ENCODE measurements at regions of chr2 and their contacts with region 1.

Region 1: GRCh38 chr2:28406276-28407096 is 13.8 kb downstream of the FOSL2 start:
- DNase-seq: no peak
- H3K4me3 ChIP-seq: no peak overlapping the region
- H3K4me1 ChIP-seq: no peaks in the 10 kb centered on the region
- H3K27me3 ChIP-seq: no peaks in the 10 kb centered on the region

Region 2: GRCh38 chr2:27703638-27704341 is 702.7 kb before region 1 on chr2:
- in situ Hi-C with region 1: loop called (anchors 10 kb)
- DNase-seq: peak; percentile 78 to 90
- H3K4me3 ChIP-seq: no peak overlapping the region
- H3K4me1 ChIP-seq: no peaks in the 10 kb centered on the region
- H3K27me3 ChIP-seq: no peaks in the 10 kb centered on the region; the same call in 1 of the 2 replicates

Region 3: DNA sequence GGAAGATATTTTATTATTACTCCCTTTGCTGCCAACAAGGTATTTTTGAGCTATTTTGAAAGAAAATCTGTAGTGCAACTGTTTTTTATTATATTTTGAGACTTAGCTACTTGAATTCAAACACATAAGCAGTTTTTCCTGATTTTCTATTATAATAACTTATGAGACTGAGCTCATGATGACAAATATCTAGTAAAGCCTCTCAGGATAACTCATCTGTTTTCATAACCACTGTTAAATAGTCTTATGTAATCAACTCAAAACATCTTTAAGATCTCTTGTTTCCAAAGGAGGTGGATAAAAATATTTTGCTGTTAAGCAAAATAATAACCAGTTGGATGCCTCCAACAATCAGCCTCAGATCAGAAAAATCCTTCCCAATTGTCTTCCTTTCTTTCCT is 323.2 kb after region 1 on chr2:
- in situ Hi-C with region 1: no loop called
- DNase-seq: no peak
- H3K4me3 ChIP-seq: no peak overlapping the region
- H3K4me1 ChIP-seq: no peaks in the 10 kb centered on the region; the same call in 1 of the 2 replicates
- H3K27me3 ChIP-seq: no peaks in the 10 kb centered on the region

Region 4: GRCh38 chr2:28835781-28836180 is 429.3 kb after region 1 on chr2:
- in situ Hi-C with region 1: no loop called
- DNase-seq: no peak
- H3K4me3 ChIP-seq: no peak overlapping the region
- H3K4me1 ChIP-seq: peaks cover 3% of the 10 kb centered on the region
- H3K27me3 ChIP-seq: no peaks in the 10 kb centered on the region